ENCODE measurements at regions of chr1 and their contacts with region 1.

Region 1: GRCh38 chr1:176559878-176560277 is 96.9 kb downstream of the PAPPA2 start:
- DNase-seq: peak; percentile 43
- ATAC-seq: peak; percentile 60
- H3K4me3 Mint-ChIP-seq: no peak overlapping the region
- H3K27ac Mint-ChIP-seq: no peak overlapping the region
- H3K4me1 Mint-ChIP-seq: no peaks in the 10 kb centered on the region
- H3K27me3 Mint-ChIP-seq: peaks cover 2% of the 10 kb centered on the region

Region 2: DNA sequence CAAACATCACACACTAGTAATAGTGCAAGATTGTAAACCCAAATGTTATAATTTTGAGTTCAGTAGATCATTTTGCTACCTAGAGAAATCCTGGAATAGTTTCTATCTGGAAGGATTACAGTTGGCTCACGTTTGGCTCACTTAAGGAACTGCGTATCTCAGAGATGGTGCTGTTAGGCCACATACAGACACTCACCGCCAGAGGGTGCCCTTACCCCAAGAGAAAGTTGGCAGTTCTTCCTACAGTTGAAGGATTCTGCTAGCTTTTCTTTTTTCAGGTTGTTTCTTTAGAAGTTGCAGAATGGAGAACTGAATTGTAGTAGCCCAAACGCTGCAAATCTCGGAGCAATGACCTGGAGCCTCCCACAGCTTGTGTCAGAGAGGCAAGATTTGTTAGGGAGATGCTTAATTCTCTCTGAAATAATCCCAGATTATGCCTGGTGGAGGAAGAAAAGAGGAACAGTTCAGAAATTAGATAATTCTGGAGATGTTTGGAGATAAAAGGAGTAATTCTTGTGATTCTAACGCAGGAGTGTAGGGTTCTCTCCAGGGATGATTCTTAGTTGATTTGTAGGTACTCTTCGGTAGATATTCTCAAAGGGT is 184.8 kb before region 1 on chr1:
- CTCF ChIA-PET with region 1: no interaction called
- DNase-seq: peak; percentile 73
- ATAC-seq: peak; percentile 49
- H3K4me3 Mint-ChIP-seq: no peak overlapping the region
- H3K27ac Mint-ChIP-seq: no peak overlapping the region
- H3K4me1 Mint-ChIP-seq: no peaks in the 10 kb centered on the region
- H3K27me3 Mint-ChIP-seq: peaks cover 7% of the 10 kb centered on the region

Region 3: DNA sequence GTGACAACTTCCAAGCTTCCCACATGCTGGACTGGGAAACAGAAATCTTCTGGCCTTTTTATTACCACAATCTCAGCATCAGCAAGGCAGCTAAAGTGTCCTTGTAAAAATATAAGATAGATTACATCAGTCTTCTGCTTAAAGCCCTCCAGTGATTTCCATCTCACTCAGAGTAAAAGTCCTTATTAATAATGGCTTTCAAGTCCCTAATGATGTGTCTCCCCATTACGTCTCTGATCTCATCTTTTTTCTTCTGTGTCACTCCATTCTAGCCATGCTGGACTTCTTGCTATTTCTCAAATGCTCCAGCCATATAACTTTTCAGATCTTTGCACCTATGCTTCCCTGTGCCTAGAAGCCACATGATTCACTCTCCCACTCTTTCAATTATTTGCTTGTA is 74.8 kb before region 1 on chr1:
- CTCF ChIA-PET with region 1: no interaction called
- DNase-seq: no peak
- ATAC-seq: no peak
- H3K4me3 Mint-ChIP-seq: no peak overlapping the region
- H3K27ac Mint-ChIP-seq: no peak overlapping the region
- H3K4me1 Mint-ChIP-seq: no peaks in the 10 kb centered on the region
- H3K27me3 Mint-ChIP-seq: no peaks in the 10 kb centered on the region

Region 4: DNA sequence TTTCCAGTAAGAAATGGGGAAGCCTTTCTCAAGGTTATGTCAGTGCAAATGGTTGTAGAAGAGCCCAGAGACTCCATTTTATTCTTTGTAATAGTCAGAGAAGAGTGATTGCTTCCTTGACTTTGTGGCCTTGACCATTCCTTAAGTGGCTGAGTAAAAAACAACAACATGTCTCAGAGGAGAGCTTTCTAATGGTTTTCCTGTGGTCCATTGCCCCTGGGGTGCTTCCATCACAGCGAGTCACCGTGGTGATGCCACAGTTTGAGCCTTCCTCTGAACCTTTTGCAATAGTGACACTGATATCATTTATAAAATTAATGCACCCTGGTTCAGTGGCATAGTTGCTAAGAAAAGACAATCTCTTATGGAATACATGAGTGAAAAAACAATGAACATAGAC is 58.3 kb before region 1 on chr1:
- CTCF ChIA-PET with region 1: no interaction called
- DNase-seq: no peak
- ATAC-seq: no peak
- H3K4me3 Mint-ChIP-seq: no peak overlapping the region
- H3K27ac Mint-ChIP-seq: no peak overlapping the region
- H3K4me1 Mint-ChIP-seq: no peaks in the 10 kb centered on the region
- H3K27me3 Mint-ChIP-seq: peaks cover 4% of the 10 kb centered on the region

Region 5: GRCh38 chr1:176539018-176539417 is 20.9 kb before region 1 on chr1:
- CTCF ChIA-PET with region 1: no interaction called
- DNase-seq: no peak
- ATAC-seq: no peak
- H3K4me3 Mint-ChIP-seq: no peak overlapping the region
- H3K27ac Mint-ChIP-seq: no peak overlapping the region
- H3K4me1 Mint-ChIP-seq: no peaks in the 10 kb centered on the region
- H3K27me3 Mint-ChIP-seq: no peaks in the 10 kb centered on the region

Region 6: GRCh38 chr1:176880954-176881595 is 321.2 kb after region 1 on chr1:
- CTCF ChIA-PET with region 1: interaction called, 11 read pairs
- DNase-seq: peak; percentile 50
- ATAC-seq: no peak
- H3K4me3 Mint-ChIP-seq: no peak overlapping the region
- H3K27ac Mint-ChIP-seq: no peak overlapping the region
- H3K4me1 Mint-ChIP-seq: no peaks in the 10 kb centered on the region
- H3K27me3 Mint-ChIP-seq: no peaks in the 10 kb centered on the region

Measured in activated CD8-positive, alpha-beta memory T cell treated with anti-CD3 and anti-CD28 coated beads, Interleukin-2, amount 10 ng/mL, durations not matched to agents 7 days and 5 days (primary cell).